Activated T-helper 1 cell treated with anti-CD3 and anti-CD28 coated beads, Interleukin-12 subunit alpha, Interleukin-12 subunit beta, Interleukin-2, Interleukin-4 antibody, amounts not matched to agents 30 ng/mL and 10 ng/mL and 1 ng/mL, durations not matched to agents 14 hours and 24 hours and 36 hours (primary cell): ENCODE measurements at regions of chr12 and their contacts with region 1.

Region 1: GRCh38 chr12:111405149-111405860 is 418 bp upstream of the SH2B3 start:
- DNase-seq: peak; percentile 95
- H3K4me3 Mint-ChIP-seq: peak overlapping the region; percentile 93
- H3K27ac Mint-ChIP-seq: peak overlapping the region; percentile 99
- H3K4me1 Mint-ChIP-seq: peaks cover 44% of the 10 kb centered on the region
- H3K27me3 Mint-ChIP-seq: peaks cover 10% of the 10 kb centered on the region

Region 2: GRCh38 chr12:111330800-111331752 is 74.2 kb before region 1 on chr12:
- intact Hi-C with region 1: loop called (anchors 2 kb)
- DNase-seq: no peak
- H3K4me3 Mint-ChIP-seq: no peak overlapping the region
- H3K27ac Mint-ChIP-seq: no peak overlapping the region
- H3K4me1 Mint-ChIP-seq: peaks cover 5% of the 10 kb centered on the region
- H3K27me3 Mint-ChIP-seq: no peaks in the 10 kb centered on the region

Region 3: GRCh38 chr12:111434680-111435338 is 29.5 kb after region 1 on chr12:
- intact Hi-C with region 1: loop called (anchors 1 kb)
- DNase-seq: peak; percentile 83
- H3K4me3 Mint-ChIP-seq: peak overlapping the region; percentile 68
- H3K27ac Mint-ChIP-seq: peak overlapping the region; percentile 97
- H3K4me1 Mint-ChIP-seq: peaks cover 88% of the 10 kb centered on the region
- H3K27me3 Mint-ChIP-seq: no peaks in the 10 kb centered on the region

Region 4: DNA sequence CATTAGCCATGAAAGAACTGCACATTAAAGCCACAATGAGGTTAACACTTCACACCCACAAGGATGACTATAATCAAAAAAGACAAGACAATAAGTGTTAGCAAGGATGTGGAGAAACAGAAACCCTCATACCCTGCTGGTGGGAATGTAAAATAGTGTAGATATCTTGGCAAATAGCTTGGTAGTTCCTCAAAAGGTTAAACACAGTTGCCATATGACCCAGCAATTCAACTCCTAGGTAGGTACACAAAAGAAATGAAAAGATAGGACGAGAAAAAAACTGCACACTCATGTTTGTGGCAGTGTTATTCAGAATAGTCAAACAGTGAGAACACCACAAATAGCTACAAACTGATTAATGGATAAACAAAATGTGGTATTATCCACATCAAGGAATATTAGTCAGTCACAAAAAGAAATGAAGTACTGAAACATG is 100.3 kb after region 1 on chr12:
- intact Hi-C with region 1: loop called (anchors 1 kb)
- DNase-seq: no peak
- H3K4me3 Mint-ChIP-seq: no peak overlapping the region
- H3K27ac Mint-ChIP-seq: peak overlapping the region; percentile 51
- H3K4me1 Mint-ChIP-seq: peaks cover 16% of the 10 kb centered on the region
- H3K27me3 Mint-ChIP-seq: no peaks in the 10 kb centered on the region

Region 5: DNA sequence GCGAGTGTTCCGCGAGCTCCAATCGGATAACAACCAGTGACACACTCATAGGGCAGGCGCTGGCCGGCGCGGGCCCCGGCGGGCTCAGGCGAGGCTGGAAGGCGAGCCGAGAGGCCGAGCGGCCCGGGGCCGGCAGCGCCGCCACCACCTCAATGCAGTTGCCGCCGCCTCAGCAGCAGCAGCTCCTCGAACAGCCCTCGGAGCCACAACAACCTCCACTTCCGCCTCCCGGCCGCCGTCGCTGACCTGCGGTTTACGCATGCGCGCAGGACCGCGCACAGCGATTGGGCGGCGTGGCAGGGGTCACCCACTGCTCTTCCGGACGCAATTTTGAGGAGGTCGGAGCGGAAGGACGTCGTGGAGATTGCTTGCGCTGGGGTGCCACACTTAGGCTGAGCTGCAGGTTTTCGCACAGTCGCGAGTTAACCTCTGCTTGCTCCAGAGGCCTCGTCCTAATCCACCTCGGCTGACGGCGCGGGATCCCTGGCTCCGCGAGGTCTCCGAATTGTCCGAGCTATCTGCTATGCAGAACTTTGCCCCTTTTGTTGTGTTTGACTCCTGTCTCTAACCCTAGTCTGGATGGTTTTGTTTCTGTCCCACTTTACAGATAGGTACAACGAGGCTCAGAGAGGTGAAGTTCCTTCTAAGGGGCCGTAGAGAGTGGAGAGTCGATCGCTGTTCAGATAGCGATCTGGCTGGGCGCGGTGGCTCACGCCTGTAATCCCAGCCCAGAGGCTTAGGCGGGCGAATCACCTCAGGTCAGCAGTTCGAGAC is 280.6 kb after region 1 on chr12 and contains the starts of genes ACAD10 and BRAP:
- intact Hi-C with region 1: loop called (anchors 2 kb)
- DNase-seq: peak; percentile 96
- H3K4me3 Mint-ChIP-seq: peak within 1 kb of the TSS; percentile 97
- H3K27ac Mint-ChIP-seq: peak within 1 kb of the TSS; percentile 98
- H3K4me1 Mint-ChIP-seq: peaks cover 31% of the 10 kb centered on the region
- H3K27me3 Mint-ChIP-seq: no peaks in the 10 kb centered on the region
- total RNA-seq, gene ACAD10: 21.2 and 24.2 TPM in 2 replicates
- total RNA-seq, gene BRAP: 22.1 and 22.2 TPM in 2 replicates